ENCODE measurements at regions of chr16 and their contacts with region 1.

Region 1: DNA sequence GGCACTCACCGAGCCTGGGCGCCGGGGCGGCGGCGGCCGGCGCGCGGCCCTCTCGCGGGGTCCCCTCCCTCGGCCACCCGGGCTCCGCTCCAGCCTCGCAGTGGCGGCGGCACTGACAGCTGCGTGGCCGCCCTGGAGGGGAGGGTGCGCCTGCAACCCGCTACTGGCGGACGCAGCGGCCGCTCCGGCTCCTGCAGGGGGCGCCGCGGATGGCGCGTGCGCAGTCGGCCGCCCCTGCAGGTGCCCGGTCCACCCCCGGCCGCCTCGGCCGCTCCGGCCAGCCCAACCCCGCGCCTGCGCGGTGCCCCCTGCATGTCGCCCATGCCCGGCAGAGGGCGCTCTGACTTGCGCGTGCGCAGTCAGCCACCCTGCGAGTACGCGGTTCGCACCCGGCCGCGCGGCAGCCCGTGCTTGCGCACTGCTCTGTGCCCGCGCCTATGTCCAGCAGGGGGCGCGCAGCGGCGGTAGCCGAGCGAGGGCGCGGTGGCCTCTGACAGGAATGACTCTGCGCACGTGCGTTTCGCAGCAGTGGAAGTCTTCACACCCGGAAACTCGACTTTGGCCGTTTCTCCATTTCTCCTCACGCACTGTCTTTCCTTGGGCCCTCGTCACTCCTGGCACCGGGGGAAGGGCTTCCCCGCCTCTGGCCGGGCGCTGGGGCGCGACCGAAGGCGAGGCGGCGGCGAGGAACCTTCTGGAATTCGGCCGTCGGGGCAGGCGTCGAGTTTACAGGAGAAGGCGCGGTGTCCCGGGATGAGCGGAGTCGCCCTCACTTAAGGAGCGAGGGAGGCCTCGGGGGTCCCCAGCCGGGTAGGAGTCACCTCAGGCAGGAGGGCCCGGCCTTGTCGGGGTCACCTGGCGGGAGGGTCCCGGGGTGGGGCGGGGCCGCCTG is at the start of gene ABCA3:
- DNase-seq: peak; percentile 91 to 99 (median 94)
- H3K4me3 ChIP-seq: peak within 1 kb of the TSS; percentile 74
- H3K27ac ChIP-seq: peak within 1 kb of the TSS in 1 of 2 donors; percentile 53
- H3K4me1 ChIP-seq: peaks cover 14% of the 10 kb centered on the region
- H3K27me3 ChIP-seq: no peaks in the 10 kb centered on the region
- CTCF ChIP-seq: peak; percentile 98 to 100 (median 100)
- EP300 ChIP-seq: no peak
- POLR2A ChIP-seq: no peak
- total RNA-seq, gene ABCA3: 2.0 to 11.3 (median 6.9) TPM

Region 2: GRCh38 chr16:2429034-2429770 is 88.4 kb after region 1 on chr16 and contains the start of gene CCNF:
- intact Hi-C with region 1: loop called in 2 of 4 experiments (anchors 2 to 10 kb)
- DNase-seq: peak; percentile 97 to 99 (median 98)
- H3K4me3 ChIP-seq: peak within 1 kb of the TSS; percentile 61
- H3K27ac ChIP-seq: peak within 1 kb of the TSS; percentile 57 to 89
- H3K4me1 ChIP-seq: peaks cover 2% of the 10 kb centered on the region
- H3K27me3 ChIP-seq: no peaks in the 10 kb centered on the region
- CTCF ChIP-seq: peak in 2 of 3 donors; percentile 16 to 29
- EP300 ChIP-seq: no peak
- POLR2A ChIP-seq: peak; percentile 86
- total RNA-seq, gene CCNF: 1.4 to 2.5 (median 2.0) TPM

Region 3: GRCh38 chr16:2458887-2459646 is 118.3 kb after region 1 on chr16:
- intact Hi-C with region 1: no loop called
- DNase-seq: peak in 2 of 5 donors; percentile 35 to 48
- H3K4me3 ChIP-seq: peak overlapping the region; percentile 38
- H3K27ac ChIP-seq: no peak overlapping the region
- H3K4me1 ChIP-seq: peaks cover 3% of the 10 kb centered on the region
- H3K27me3 ChIP-seq: no peaks in the 10 kb centered on the region
- CTCF ChIP-seq: no peak
- EP300 ChIP-seq: no peak
- POLR2A ChIP-seq: no peak

Region 4: GRCh38 chr16:2500918-2501750 is 160.3 kb after region 1 on chr16:
- intact Hi-C with region 1: loop called (anchors 2 to 5 kb)
- DNase-seq: peak; percentile 82 to 93 (median 87)
- H3K4me3 ChIP-seq: peak overlapping the region; percentile 1
- H3K27ac ChIP-seq: peak overlapping the region in 1 of 2 donors; percentile 73
- H3K4me1 ChIP-seq: peaks cover 5% of the 10 kb centered on the region
- H3K27me3 ChIP-seq: no peaks in the 10 kb centered on the region
- CTCF ChIP-seq: peak; percentile 98
- EP300 ChIP-seq: no peak
- POLR2A ChIP-seq: no peak